ENCODE measurements at regions of chr9 and their contacts with region 1.

Region 1: GRCh38 chr9:105737205-105737604 is 42.9 kb downstream of the TMEM38B start:
- DNase-seq: no peak
- H3K4me3 Mint-ChIP-seq: no peak overlapping the region
- H3K27ac Mint-ChIP-seq: no peak overlapping the region
- H3K4me1 Mint-ChIP-seq: no peaks in the 10 kb centered on the region
- H3K27me3 Mint-ChIP-seq: no peaks in the 10 kb centered on the region
- CTCF ChIP-seq: no peak

Region 2: DNA sequence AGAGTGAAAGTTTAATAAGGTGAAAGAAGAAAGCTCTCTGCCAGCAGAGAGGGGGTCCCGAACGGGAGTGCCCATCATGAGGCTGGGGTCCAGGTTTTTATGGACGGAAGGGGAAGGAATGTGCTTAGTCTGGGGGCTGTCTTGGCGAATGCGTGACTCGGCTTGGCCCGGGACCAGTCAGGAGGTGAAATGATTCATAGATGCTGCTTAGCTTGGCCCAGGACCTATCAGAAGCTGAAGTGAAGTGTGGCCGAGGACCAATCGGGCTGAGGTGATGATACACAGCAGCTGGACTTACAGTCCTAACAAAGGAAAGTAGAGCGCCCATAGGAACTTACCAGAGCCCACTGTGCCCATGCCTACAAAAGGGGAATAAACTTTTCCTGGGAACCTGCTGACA is 183.2 kb before region 1 on chr9:
- CTCF ChIA-PET with region 1: no interaction called
- POLR2A ChIA-PET with region 1: no interaction called
- intact Hi-C with region 1: no loop called
- DNase-seq: no peak
- H3K4me3 Mint-ChIP-seq: no peak overlapping the region
- H3K27ac Mint-ChIP-seq: no peak overlapping the region
- H3K4me1 Mint-ChIP-seq: peaks cover 6% of the 10 kb centered on the region
- H3K27me3 Mint-ChIP-seq: no peaks in the 10 kb centered on the region
- CTCF ChIP-seq: no peak

Region 3: GRCh38 chr9:105713260-105714019 is 23.8 kb before region 1 on chr9:
- CTCF ChIA-PET with region 1: interaction called, 11 read pairs
- POLR2A ChIA-PET with region 1: no interaction called
- intact Hi-C with region 1: no loop called
- DNase-seq: no peak
- H3K4me3 Mint-ChIP-seq: no peak overlapping the region
- H3K27ac Mint-ChIP-seq: no peak overlapping the region
- H3K4me1 Mint-ChIP-seq: no peaks in the 10 kb centered on the region
- H3K27me3 Mint-ChIP-seq: no peaks in the 10 kb centered on the region
- CTCF ChIP-seq: no peak

Region 4: GRCh38 chr9:105835721-105836120 is 98.5 kb after region 1 on chr9:
- CTCF ChIA-PET with region 1: no interaction called
- POLR2A ChIA-PET with region 1: no interaction called
- intact Hi-C with region 1: no loop called
- DNase-seq: no peak
- H3K4me3 Mint-ChIP-seq: no peak overlapping the region
- H3K27ac Mint-ChIP-seq: no peak overlapping the region
- H3K4me1 Mint-ChIP-seq: no peaks in the 10 kb centered on the region
- H3K27me3 Mint-ChIP-seq: peaks cover 9% of the 10 kb centered on the region
- CTCF ChIP-seq: no peak